ENCODE measurements at regions of chr2 and their contacts with region 1.

Region 1: DNA sequence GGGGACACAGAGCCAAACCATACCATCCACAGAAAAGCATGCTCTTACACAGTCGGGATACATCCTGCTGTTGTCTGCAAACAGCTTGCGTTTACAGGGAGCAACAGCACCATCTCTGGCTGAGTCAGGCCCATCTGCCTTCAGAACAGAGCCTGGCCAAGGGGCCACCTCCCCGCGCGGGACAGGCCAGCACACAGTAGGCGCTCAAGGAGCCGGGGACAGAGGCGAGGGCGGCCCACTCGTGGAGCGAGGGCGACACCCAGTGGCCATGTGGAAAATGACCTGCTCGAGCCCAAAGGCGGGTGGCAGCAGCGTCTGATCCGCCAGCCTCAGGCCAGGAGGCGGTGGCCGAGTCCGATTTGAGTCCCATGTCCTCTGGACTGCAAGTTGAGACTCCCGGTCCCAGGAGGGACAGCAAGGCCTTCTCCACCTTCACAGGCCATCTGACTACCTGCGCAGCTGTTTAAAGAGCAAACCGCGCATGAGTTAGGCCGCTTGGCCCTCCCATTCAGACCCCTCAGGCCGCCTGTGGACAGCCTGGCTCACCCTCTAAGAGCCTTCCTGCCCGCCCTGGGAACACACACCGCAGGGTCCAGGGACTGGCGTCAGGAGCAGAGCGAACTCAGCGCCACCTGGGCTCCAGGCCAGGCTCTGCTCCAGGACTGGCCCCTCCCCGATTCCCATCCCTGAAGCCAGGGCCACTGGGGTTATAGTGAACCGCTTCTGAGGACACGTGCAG is 38.3 kb downstream of the TTC32 start:
- DNase-seq: peak; percentile 74
- ATAC-seq: peak; percentile 85 to 88

Region 2: GRCh38 chr2:18387441-18388206 is 1475.8 kb before region 1 on chr2:
- intact Hi-C with region 1: loop called in 1 of 2 experiments (anchors 10 kb)
- DNase-seq: peak; percentile 64
- ATAC-seq: peak; percentile 91 to 93

Region 3: GRCh38 chr2:18435421-18436037 is 1427.9 kb before region 1 on chr2:
- intact Hi-C with region 1: loop called in 1 of 2 experiments (anchors 10 kb)
- DNase-seq: no peak
- ATAC-seq: peak; percentile 44 to 46

Region 4: GRCh38 chr2:18520451-18521425 is 1342.7 kb before region 1 on chr2:
- intact Hi-C with region 1: loop called in 1 of 2 experiments (anchors 2 kb)
- DNase-seq: peak; percentile 86
- ATAC-seq: peak; percentile 83 to 84

Region 5: GRCh38 chr2:18749912-18750526 is 1113.5 kb before region 1 on chr2:
- intact Hi-C with region 1: loop called (anchors 2 to 5 kb)
- DNase-seq: peak; percentile 47
- ATAC-seq: peak in 1 of 2 donors; percentile 60